ENCODE measurements at regions of chr3 and their contacts with region 1.

Region 1: GRCh38 chr3:186540221-186540834 is 3.9 kb downstream of the CRYGS start:
- DNase-seq: peak; percentile 39 to 83
- H3K4me3 ChIP-seq: no peak overlapping the region
- H3K27ac ChIP-seq: no peak overlapping the region
- H3K4me1 ChIP-seq: no peaks in the 10 kb centered on the region
- H3K27me3 ChIP-seq: no peaks in the 10 kb centered on the region
- CTCF ChIP-seq: peak in 2 of 3 experiments; percentile 75 to 77; a peak in 3 of 4 replicates
- EP300 ChIP-seq: no peak
- POLR2A ChIP-seq: no peak
- RAD21 ChIP-seq: peak; percentile 94 to 95

Region 2: DNA sequence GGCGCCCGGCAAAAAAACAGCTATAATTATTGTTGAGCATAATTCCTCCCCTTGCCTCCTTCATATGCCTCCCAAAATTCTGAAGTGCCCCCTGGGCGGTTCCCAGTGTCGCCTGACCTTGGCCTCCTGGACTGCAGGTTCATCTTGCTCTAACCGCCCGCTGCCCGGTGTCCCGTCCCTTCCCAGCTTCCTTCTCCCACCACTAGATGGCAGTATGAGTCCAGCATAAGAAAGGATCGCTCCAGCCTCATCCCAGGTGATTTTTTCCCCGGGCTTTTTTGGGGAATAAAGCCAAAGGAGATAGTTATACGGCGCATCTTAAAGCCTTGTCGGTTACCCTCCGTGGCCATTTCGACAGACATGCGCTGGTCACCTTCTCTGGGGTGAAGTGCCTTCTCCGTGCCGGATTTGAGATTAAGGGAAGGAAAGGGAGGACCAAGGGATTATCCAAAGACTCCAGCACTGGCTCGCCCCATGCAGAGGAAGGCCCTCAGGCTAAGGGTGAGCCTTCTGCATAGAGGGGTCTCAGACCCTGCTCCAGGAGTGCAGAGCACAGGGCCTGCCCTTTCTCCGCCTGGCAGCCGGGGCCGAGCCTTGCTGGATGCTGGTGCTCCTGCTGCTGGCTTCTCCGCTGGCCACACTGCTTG is 556.7 kb before region 1 on chr3:
- CTCF ChIA-PET with region 1: interaction called, 26 read pairs
- POLR2A ChIA-PET with region 1: no interaction called
- DNase-seq: peak; percentile 49 to 90
- H3K4me3 ChIP-seq: peak overlapping the region in 3 of 4 experiments; percentile 12 to 44 (median 34); a peak in 5 of 8 replicates
- H3K27ac ChIP-seq: no peak overlapping the region
- H3K4me1 ChIP-seq: peaks cover 0 to 5% (median 2%) of the 10 kb centered on the region in 4 experiments; a peak in 3 of 7 replicates
- H3K27me3 ChIP-seq: peaks cover 0 to 3% (median 0%) of the 10 kb centered on the region in 4 experiments; a peak in 2 of 7 replicates
- CTCF ChIP-seq: peak; percentile 85 to 93 (median 88)
- EP300 ChIP-seq: no peak
- POLR2A ChIP-seq: no peak
- RAD21 ChIP-seq: peak; percentile 98 to 99

Region 3: GRCh38 chr3:186259612-186260383 is 280.5 kb before region 1 on chr3:
- CTCF ChIA-PET with region 1: interaction called, 146 read pairs
- POLR2A ChIA-PET with region 1: interaction called, 5 read pairs
- DNase-seq: peak; percentile 77 to 89
- H3K4me3 ChIP-seq: no peak overlapping the region
- H3K27ac ChIP-seq: no peak overlapping the region
- H3K4me1 ChIP-seq: peaks cover 0 to 8% (median 4%) of the 10 kb centered on the region in 4 experiments; a peak in 3 of 7 replicates
- H3K27me3 ChIP-seq: no peaks in the 10 kb centered on the region; a peak in 2 of 7 replicates
- CTCF ChIP-seq: peak; percentile 79 to 97 (median 94)
- EP300 ChIP-seq: peak in 1 of 2 experiments; percentile 41; a peak in 1 of 3 replicates
- POLR2A ChIP-seq: 0 out of 3 replicates have a peak, but pooled peaks of 1 of the 2 experiments have one; percentile 29
- RAD21 ChIP-seq: peak; percentile 87 to 93

Region 4: GRCh38 chr3:186307594-186308221 is 232.6 kb before region 1 on chr3:
- CTCF ChIA-PET with region 1: interaction called, 13 read pairs
- POLR2A ChIA-PET with region 1: no interaction called
- DNase-seq: no peak
- H3K4me3 ChIP-seq: no peak overlapping the region
- H3K27ac ChIP-seq: no peak overlapping the region
- H3K4me1 ChIP-seq: peaks cover 0 to 9% (median 7%) of the 10 kb centered on the region in 4 experiments; a peak in 4 of 7 replicates
- H3K27me3 ChIP-seq: peaks cover 0 to 4% (median 0%) of the 10 kb centered on the region in 4 experiments; a peak in 1 of 7 replicates
- CTCF ChIP-seq: no peak
- EP300 ChIP-seq: no peak
- POLR2A ChIP-seq: no peak
- RAD21 ChIP-seq: no peak

Region 5: DNA sequence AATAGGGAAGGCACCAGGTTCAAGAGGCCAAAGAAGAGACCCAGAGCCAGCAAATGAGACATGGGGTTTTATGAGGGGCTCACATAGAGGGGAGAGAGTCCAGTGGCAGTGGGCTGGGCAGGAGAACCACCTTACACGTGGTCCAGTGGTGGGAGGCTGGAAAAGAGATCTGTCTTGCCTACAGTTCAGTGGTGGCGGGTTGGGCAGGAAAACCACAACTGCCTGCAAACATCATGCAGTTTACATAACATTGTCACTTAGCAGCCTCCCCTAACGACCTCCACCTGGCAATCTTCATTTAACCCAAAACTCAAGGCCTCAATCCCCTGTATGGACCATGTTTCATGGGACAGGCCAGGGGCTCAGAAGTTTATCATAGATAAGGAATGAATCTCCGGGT is 25.2 kb before region 1 on chr3:
- CTCF ChIA-PET with region 1: interaction called, 16 read pairs
- POLR2A ChIA-PET with region 1: interaction called, 4 read pairs
- DNase-seq: no peak
- H3K4me3 ChIP-seq: no peak overlapping the region
- H3K27ac ChIP-seq: no peak overlapping the region
- H3K4me1 ChIP-seq: peaks cover 0 to 2% (median 0%) of the 10 kb centered on the region in 4 experiments; a peak in 1 of 7 replicates
- H3K27me3 ChIP-seq: no peaks in the 10 kb centered on the region; a peak in 2 of 7 replicates
- CTCF ChIP-seq: no peak
- EP300 ChIP-seq: no peak
- POLR2A ChIP-seq: no peak
- RAD21 ChIP-seq: no peak

Measured in H1 (cell line).